A549 (cell line): ENCODE measurements at regions of chr4 and their contacts with region 1.

Region 1: GRCh38 chr4:110516106-110516922 is 40.4 kb downstream of the ENPEP start:
- DNase-seq: peak; percentile 49 to 74
- ATAC-seq: peak; percentile 99
- H3K4me3 ChIP-seq: peak overlapping the region; percentile 46
- H3K27ac ChIP-seq: no peak overlapping the region; a peak in 1 of 6 replicates
- H3K4me1 ChIP-seq: no peaks in the 10 kb centered on the region
- CTCF ChIP-seq: peak; percentile 66
- EP300 ChIP-seq: no peak
- POLR2A ChIP-seq: no peak
- RAD21 ChIP-seq: peak; percentile 42 to 48; a peak in 4 of 5 replicates

Region 2: GRCh38 chr4:109998867-109999584 is 517.3 kb before region 1 on chr4:
- CTCF ChIA-PET with region 1: interaction called, 190 read pairs
- POLR2A ChIA-PET with region 1: no interaction called
- DNase-seq: peak; percentile 37 to 62
- ATAC-seq: peak; percentile 83 to 88
- H3K4me3 ChIP-seq: no peak overlapping the region
- H3K27ac ChIP-seq: no peak overlapping the region
- H3K4me1 ChIP-seq: no peaks in the 10 kb centered on the region
- CTCF ChIP-seq: peak; percentile 75
- EP300 ChIP-seq: no peak
- POLR2A ChIP-seq: no peak
- RAD21 ChIP-seq: peak; percentile 76 to 78

Region 3: DNA sequence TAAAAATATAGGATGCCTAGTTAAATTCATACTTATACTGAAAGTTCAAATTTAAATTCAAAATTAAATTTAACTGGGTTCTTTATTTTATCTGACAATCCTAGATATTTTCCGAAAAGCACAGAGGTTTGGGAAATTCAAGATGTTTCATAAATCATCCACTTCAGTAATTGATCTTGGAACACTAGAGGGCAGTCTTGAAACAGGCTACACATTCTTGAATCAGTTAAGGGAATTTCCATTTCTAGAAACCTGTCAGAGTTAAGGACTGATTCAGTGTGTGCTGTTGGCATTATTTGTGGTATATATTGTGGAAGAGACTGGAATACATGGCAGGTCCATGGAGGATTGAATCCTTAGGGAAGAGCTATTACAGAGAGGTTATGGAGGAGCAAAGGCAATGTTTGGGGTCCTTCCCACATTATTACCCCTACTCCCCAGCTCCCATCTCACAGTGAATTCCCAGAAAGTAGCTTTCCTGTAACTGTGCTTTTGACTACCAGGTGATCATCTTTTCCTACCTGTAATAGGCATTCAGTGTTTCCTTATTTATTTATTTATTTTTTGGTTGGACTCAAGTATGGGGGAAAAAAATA is 510.8 kb before region 1 on chr4:
- CTCF ChIA-PET with region 1: interaction called, 190 read pairs
- POLR2A ChIA-PET with region 1: no interaction called
- DNase-seq: peak; percentile 55 to 64
- ATAC-seq: peak; percentile 59 to 75; a peak in 5 of 6 replicates
- H3K4me3 ChIP-seq: no peak overlapping the region
- H3K27ac ChIP-seq: no peak overlapping the region
- H3K4me1 ChIP-seq: no peaks in the 10 kb centered on the region
- CTCF ChIP-seq: peak; percentile 82
- EP300 ChIP-seq: no peak
- POLR2A ChIP-seq: no peak
- RAD21 ChIP-seq: peak; percentile 86 to 90

Region 4: GRCh38 chr4:110751986-110752385 is 235.7 kb after region 1 on chr4:
- CTCF ChIA-PET with region 1: no interaction called
- POLR2A ChIA-PET with region 1: no interaction called
- DNase-seq: no peak
- ATAC-seq: no peak
- H3K4me3 ChIP-seq: no peak overlapping the region
- H3K27ac ChIP-seq: no peak overlapping the region
- H3K4me1 ChIP-seq: no peaks in the 10 kb centered on the region
- CTCF ChIP-seq: no peak
- EP300 ChIP-seq: no peak
- POLR2A ChIP-seq: no peak
- RAD21 ChIP-seq: no peak